B cell (primary cell): ENCODE measurements at regions of chr16 and their contacts with region 1.

Region 1: GRCh38 chr16:30657866-30658730 is at the start of gene FBRS:
- DNase-seq: peak; percentile 100
- ATAC-seq: peak; percentile 76
- H3K4me3 ChIP-seq: peak within 1 kb of the TSS; percentile 49 to 90 (median 79)
- H3K4me3 Mint-ChIP-seq: peak within 1 kb of the TSS; percentile 97
- H3K27ac ChIP-seq: peak within 1 kb of the TSS; percentile 88 to 98
- H3K27ac Mint-ChIP-seq: peak within 1 kb of the TSS; percentile 100
- H3K4me1 ChIP-seq: peaks cover 30 to 44% of the 10 kb centered on the region in 2 donors
- H3K4me1 Mint-ChIP-seq: peaks cover 30% of the 10 kb centered on the region
- H3K27me3 ChIP-seq: no peaks in the 10 kb centered on the region
- H3K27me3 Mint-ChIP-seq: no peaks in the 10 kb centered on the region
- CTCF ChIP-seq: peak; percentile 81
- total RNA-seq, gene FBRS: 191 and 194 TPM in 2 replicates

Region 2: DNA sequence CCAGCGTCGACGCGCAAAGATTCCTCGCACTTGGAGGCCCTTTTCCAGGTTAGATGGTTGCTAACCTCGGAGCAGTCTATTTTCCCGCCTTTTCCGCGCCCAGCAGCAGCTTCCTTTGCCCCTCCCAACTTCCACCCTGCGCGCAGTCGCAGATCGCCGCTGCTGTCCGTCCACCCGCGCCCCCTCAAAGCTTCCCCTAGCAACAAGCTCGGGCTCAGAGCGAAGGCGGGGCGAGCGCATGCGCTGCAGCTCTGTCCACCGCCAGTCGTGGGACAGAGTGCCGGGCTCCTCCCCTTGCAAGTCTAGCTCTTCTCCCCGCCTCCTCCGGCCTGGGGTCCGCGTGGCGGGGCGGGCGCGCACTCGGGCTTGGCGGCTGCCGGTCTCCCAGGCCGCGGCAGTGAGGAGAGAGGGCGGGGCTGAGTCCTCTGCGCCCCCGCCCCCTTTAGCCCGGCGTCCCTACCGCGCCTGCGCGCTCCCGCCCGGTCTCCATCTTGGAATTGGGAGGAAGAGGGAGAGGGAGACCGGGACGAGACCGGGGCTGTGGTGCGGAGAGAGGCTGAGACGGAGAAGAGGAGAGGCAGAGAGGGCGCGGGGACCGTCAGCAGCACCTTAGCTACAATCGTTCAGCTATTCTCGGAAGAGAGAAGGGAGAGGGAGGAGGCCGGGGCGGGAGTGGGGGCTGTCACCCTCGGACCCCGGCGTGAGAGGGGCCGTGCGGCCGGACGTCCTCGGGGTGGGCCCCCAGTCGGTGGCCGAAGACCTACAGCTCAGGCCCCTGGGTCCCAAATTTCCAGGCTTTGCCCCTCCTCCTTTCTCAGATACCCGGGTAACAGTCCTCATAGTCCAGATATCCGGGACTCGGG is 684.5 kb before region 1 on chr16 and contains the start of gene TAOK2:
- CTCF ChIA-PET with region 1: no interaction called
- POLR2A ChIA-PET with region 1: no interaction called
- intact Hi-C with region 1: loop called (anchors 5 kb)
- DNase-seq: peak; percentile 98
- ATAC-seq: peak; percentile 99
- H3K4me3 ChIP-seq: peak within 1 kb of the TSS; percentile 79 to 100 (median 99)
- H3K4me3 Mint-ChIP-seq: peak within 1 kb of the TSS; percentile 95
- H3K27ac ChIP-seq: peak within 1 kb of the TSS; percentile 73 to 79
- H3K27ac Mint-ChIP-seq: peak within 1 kb of the TSS; percentile 94
- H3K4me1 ChIP-seq: peaks cover 31 to 38% of the 10 kb centered on the region in 2 donors
- H3K4me1 Mint-ChIP-seq: peaks cover 36% of the 10 kb centered on the region
- H3K27me3 ChIP-seq: no peaks in the 10 kb centered on the region
- H3K27me3 Mint-ChIP-seq: no peaks in the 10 kb centered on the region
- CTCF ChIP-seq: no peak
- total RNA-seq, gene TAOK2: 50.8 and 51.9 TPM in 2 replicates

Region 3: DNA sequence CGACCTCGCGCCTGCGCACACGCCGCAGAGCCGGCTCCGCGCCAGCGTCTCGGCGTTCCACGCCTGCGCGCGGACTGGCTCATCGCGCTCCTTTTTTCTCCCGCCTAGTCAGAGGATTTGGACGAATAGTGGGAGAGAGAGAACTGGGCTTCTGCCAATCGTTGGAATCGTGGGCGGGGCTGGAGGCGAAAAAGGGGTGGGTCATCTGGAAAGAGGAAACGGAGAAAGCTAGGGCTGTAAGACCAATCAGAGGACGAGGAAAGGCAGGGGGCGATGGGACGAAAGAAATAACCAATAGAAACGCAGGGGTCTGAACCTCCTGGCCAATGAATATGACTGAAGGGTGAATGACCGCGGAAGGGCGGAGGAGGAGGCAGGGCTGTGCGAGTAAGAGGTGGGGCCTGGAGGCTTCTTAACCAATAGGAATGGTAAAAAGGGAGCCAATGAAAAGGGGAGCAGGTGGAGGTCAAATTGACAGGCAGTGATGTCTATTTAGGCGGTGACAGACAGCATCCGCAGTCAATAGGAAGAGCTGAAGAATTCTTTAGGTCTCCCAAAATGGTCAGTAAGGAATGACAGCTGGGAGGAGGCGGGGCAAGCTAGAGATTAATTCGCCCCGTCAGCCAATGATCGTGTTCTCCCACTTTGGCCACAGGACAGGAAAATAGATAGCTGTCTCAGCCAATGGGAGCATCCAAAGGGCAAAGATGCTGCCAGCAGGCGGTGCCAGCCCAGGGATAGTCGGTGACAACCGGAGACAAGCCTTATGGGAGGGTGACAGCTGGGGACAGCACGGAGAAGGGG is 287.5 kb before region 1 on chr16 and contains the start of gene TBC1D10B:
- CTCF ChIA-PET with region 1: no interaction called
- POLR2A ChIA-PET with region 1: interaction called, 5 read pairs
- intact Hi-C with region 1: loop called (anchors 2 kb)
- DNase-seq: peak; percentile 99
- ATAC-seq: peak; percentile 82
- H3K4me3 ChIP-seq: peak within 1 kb of the TSS; percentile 47 to 77 (median 70)
- H3K4me3 Mint-ChIP-seq: peak within 1 kb of the TSS; percentile 86
- H3K27ac ChIP-seq: peak within 1 kb of the TSS; percentile 60 to 71
- H3K27ac Mint-ChIP-seq: peak within 1 kb of the TSS; percentile 90
- H3K4me1 ChIP-seq: peaks cover 25 to 35% of the 10 kb centered on the region in 2 donors
- H3K4me1 Mint-ChIP-seq: peaks cover 49% of the 10 kb centered on the region
- H3K27me3 ChIP-seq: no peaks in the 10 kb centered on the region
- H3K27me3 Mint-ChIP-seq: no peaks in the 10 kb centered on the region
- CTCF ChIP-seq: peak; percentile 26
- total RNA-seq, gene TBC1D10B: 53.0 and 58.0 TPM in 2 replicates

Region 4: DNA sequence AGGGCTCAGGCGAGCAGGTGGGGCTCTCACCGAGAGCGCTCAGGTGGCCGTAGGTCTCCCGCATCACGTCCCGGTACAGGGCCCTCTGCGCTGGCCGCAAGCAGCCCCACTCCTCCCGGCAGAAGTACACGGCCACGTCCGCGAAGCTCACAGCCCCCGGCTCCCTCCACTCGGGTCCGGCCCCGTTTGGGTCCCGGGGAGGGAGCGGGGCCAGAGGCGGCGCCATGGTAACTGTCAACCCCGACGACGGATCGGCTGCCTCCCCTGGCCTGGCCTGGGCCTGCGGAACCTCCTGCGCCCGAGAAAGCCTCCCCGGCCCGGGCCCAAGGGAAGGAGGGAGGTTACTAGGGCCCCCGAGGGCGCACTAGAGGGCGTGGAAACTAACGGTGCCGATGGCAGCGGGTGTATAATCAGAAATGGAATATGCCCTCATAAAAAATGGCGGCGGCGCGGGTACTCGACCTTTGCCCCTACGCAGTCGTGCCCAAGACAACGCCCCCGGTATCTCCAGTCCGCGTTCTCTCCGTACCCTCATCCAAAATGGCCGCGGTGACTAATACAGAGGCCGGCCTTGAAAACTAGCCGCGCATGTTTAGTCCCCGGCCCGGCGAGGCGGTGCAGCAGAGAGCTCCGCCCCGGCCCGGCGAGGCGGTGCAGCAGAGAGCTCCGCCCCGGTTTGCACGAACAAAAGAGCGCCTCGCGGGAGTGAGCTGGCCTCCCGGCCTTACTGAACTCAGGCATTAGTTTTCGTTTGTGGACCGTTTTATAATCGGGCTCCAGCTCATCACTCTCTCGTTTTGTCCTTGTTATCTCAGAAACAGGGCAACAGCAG is 99.9 kb before region 1 on chr16 and contains the start of gene ZNF764:
- CTCF ChIA-PET with region 1: no interaction called
- POLR2A ChIA-PET with region 1: interaction called, 4 read pairs
- intact Hi-C with region 1: loop called (anchors 1 kb)
- DNase-seq: peak; percentile 97
- ATAC-seq: peak; percentile 92
- H3K4me3 ChIP-seq: peak within 1 kb of the TSS in 4 of 5 experiments; percentile 80 to 91 (median 88)
- H3K4me3 Mint-ChIP-seq: peak within 1 kb of the TSS; percentile 86
- H3K27ac ChIP-seq: peak within 1 kb of the TSS; percentile 95 to 97
- H3K27ac Mint-ChIP-seq: peak within 1 kb of the TSS; percentile 91
- H3K4me1 ChIP-seq: peaks cover 14 to 35% of the 10 kb centered on the region in 2 donors
- H3K4me1 Mint-ChIP-seq: peaks cover 42% of the 10 kb centered on the region
- H3K27me3 ChIP-seq: no peaks in the 10 kb centered on the region
- H3K27me3 Mint-ChIP-seq: no peaks in the 10 kb centered on the region
- CTCF ChIP-seq: no peak
- total RNA-seq, gene ZNF764: 19.7 and 20.9 TPM in 2 replicates

Region 5: GRCh38 chr16:30637942-30638341 is 20.2 kb before region 1 on chr16:
- CTCF ChIA-PET with region 1: interaction called, 6 read pairs
- POLR2A ChIA-PET with region 1: interaction called, 10 read pairs
- intact Hi-C with region 1: loop called (anchors 1 kb)
- DNase-seq: peak; percentile 56
- ATAC-seq: no peak
- H3K4me3 ChIP-seq: no peak overlapping the region
- H3K4me3 Mint-ChIP-seq: no peak overlapping the region
- H3K27ac ChIP-seq: no peak overlapping the region
- H3K27ac Mint-ChIP-seq: no peak overlapping the region
- H3K4me1 ChIP-seq: peaks cover 7 to 18% of the 10 kb centered on the region in 2 donors
- H3K4me1 Mint-ChIP-seq: peaks cover 16% of the 10 kb centered on the region
- H3K27me3 ChIP-seq: no peaks in the 10 kb centered on the region
- H3K27me3 Mint-ChIP-seq: no peaks in the 10 kb centered on the region
- CTCF ChIP-seq: peak; percentile 36

Region 6: DNA sequence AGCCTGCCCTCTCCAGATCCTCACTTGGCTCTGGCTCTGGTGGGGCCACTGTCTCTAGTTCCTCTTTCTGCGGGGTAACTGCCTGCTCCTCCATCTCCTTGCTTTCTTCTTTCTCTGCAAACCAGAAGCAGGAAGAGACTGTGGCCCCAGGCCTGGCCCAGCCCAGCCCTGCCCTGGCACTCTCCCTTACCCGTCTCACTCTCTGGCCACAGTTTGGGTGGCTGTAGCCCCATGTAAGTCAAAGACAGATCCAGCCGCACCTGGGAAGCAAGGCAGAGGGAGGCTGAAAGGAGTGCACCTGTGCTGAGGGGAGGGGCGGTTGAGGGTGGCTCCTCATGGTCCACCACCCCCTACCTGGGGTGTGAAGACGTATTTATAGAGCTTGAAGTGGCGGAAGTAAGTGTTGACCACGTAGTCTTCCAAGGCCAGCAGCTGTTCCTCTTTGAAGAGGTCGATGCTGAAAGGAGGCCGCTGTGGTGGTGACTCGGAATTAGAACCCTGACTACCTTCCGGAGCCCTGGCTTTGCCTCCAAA is 101.0 kb after region 1 on chr16:
- CTCF ChIA-PET with region 1: no interaction called
- POLR2A ChIA-PET with region 1: no interaction called
- intact Hi-C with region 1: no loop called
- DNase-seq: peak; percentile 39
- ATAC-seq: no peak
- H3K4me3 ChIP-seq: no peak overlapping the region
- H3K4me3 Mint-ChIP-seq: peak overlapping the region; percentile 8
- H3K27ac ChIP-seq: peak overlapping the region; percentile 32 to 34
- H3K27ac Mint-ChIP-seq: peak overlapping the region; percentile 5
- H3K4me1 ChIP-seq: peaks cover 24 to 37% of the 10 kb centered on the region in 2 donors
- H3K4me1 Mint-ChIP-seq: peaks cover 34% of the 10 kb centered on the region
- H3K27me3 ChIP-seq: no peaks in the 10 kb centered on the region
- H3K27me3 Mint-ChIP-seq: no peaks in the 10 kb centered on the region
- CTCF ChIP-seq: no peak

Region 7: DNA sequence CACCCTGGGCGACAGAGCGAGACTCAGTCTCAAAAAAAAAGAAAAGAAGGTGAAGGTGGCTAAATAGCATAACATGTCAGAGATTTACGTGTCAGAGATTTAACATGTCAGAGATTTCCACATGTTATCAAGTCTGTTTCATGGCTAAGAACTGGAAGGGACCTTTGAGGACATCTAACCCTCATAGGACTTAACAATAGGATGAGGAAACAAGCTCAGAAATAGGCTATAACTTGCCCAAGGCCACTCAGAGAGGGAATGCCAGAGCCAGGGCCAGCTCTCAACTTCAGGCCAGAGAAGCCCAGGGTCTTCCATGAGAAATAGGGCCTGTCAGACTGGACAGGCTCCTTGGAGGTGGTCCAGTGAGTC is 155.7 kb after region 1 on chr16:
- CTCF ChIA-PET with region 1: no interaction called
- POLR2A ChIA-PET with region 1: no interaction called
- intact Hi-C with region 1: loop called (anchors 1 kb)
- DNase-seq: no peak
- ATAC-seq: no peak
- H3K4me3 ChIP-seq: peak overlapping the region; percentile 42 to 66 (median 57)
- H3K4me3 Mint-ChIP-seq: peak overlapping the region; percentile 88
- H3K27ac ChIP-seq: peak overlapping the region; percentile 65 to 69
- H3K27ac Mint-ChIP-seq: peak overlapping the region; percentile 85
- H3K4me1 ChIP-seq: peaks cover 9 to 15% of the 10 kb centered on the region in 2 donors
- H3K4me1 Mint-ChIP-seq: peaks cover 16% of the 10 kb centered on the region
- H3K27me3 ChIP-seq: no peaks in the 10 kb centered on the region
- H3K27me3 Mint-ChIP-seq: peaks cover 3% of the 10 kb centered on the region
- CTCF ChIP-seq: no peak